CD8-positive, alpha-beta T cell (primary cell): ENCODE measurements at regions of chr20 and their contacts with region 1.

Region 1: DNA sequence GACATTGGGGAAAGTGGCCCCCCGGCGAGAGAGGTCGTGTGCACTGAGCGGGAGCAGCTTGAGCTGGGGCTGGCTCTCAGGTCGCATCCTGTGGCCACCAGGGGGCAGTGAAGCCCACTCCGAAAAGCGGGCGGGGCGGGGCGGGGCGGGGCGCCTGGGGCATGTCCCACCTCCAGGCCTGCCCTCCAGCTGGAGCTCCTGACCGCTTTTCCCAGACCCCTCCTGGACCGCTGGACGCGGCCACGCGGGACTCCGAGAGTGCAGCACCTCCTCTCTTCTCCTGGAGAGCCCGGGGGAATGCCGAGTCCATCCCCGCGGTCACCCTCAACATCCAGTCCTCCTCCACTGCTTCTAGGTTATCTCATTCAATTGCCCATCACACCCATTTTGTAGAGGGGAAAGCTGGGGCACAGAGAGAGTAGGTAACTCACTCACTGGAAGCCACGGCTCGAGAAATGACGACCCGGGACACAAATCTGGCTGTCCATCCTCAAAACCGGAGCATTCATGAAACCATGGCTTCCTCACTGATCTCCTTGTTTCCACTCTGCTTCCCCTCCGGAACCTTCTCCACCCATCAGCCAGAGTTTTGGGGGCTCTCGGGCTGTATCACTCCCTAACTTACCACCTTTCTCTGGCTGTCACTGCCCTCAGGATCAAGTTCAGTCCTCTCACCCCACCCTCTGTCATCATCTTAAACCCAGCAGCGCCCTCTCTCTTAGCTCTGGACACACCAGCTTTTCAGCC is 24.1 kb downstream of the COX4I2 start:
- DNase-seq: peak; percentile 61 to 90 (median 82)
- ATAC-seq: peak; percentile 93
- H3K4me3 ChIP-seq: peak overlapping the region; percentile 47 to 61
- H3K4me3 Mint-ChIP-seq: peak overlapping the region; percentile 74
- H3K27ac ChIP-seq: peak overlapping the region; percentile 18 to 62
- H3K27ac Mint-ChIP-seq: peak overlapping the region; percentile 78
- H3K4me1 ChIP-seq: peaks cover 21% of the 10 kb centered on the region
- H3K4me1 Mint-ChIP-seq: peaks cover 34% of the 10 kb centered on the region
- H3K27me3 ChIP-seq: no peaks in the 10 kb centered on the region
- H3K27me3 Mint-ChIP-seq: no peaks in the 10 kb centered on the region
- CTCF ChIP-seq: peak; percentile 64

Region 2: GRCh38 chr20:31406115-31406514 is 255.7 kb before region 1 on chr20 and contains the start of gene DEFB121:
- CTCF ChIA-PET with region 1: no interaction called
- POLR2A ChIA-PET with region 1: no interaction called
- intact Hi-C with region 1: no loop called
- DNase-seq: no peak
- ATAC-seq: no peak
- H3K4me3 ChIP-seq: no peak within 1 kb of the TSS
- H3K4me3 Mint-ChIP-seq: no peak within 1 kb of the TSS
- H3K27ac ChIP-seq: no peak within 1 kb of the TSS
- H3K27ac Mint-ChIP-seq: no peak within 1 kb of the TSS
- H3K4me1 ChIP-seq: no peaks in the 10 kb centered on the region
- H3K4me1 Mint-ChIP-seq: no peaks in the 10 kb centered on the region
- H3K27me3 ChIP-seq: no peaks in the 10 kb centered on the region
- H3K27me3 Mint-ChIP-seq: peaks cover 4% of the 10 kb centered on the region
- CTCF ChIP-seq: no peak
- total RNA-seq, gene DEFB121: not detected

Region 3: DNA sequence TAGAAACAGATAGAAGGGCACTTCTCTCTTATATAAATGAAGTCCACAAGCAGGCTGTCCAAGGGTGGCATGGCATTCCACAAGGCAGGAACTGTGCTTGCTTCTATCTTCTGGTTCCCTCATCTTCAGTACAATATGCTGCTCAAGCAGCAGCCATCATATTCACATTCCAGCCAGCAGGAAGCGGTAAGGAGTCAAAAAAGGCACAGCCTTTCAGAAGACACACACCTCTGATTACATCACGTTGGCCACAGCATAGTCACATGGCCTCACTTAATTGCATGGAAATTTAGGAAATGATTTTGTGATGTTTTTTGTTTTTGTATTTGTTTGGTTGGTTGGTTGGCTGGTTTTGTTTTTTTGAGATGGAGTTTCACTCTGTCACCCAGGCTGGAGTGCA is 167.7 kb before region 1 on chr20:
- CTCF ChIA-PET with region 1: no interaction called
- POLR2A ChIA-PET with region 1: no interaction called
- intact Hi-C with region 1: no loop called
- DNase-seq: no peak
- ATAC-seq: no peak
- H3K4me3 ChIP-seq: no peak overlapping the region
- H3K4me3 Mint-ChIP-seq: no peak overlapping the region
- H3K27ac ChIP-seq: no peak overlapping the region
- H3K27ac Mint-ChIP-seq: no peak overlapping the region
- H3K4me1 ChIP-seq: no peaks in the 10 kb centered on the region
- H3K4me1 Mint-ChIP-seq: no peaks in the 10 kb centered on the region
- H3K27me3 ChIP-seq: no peaks in the 10 kb centered on the region
- H3K27me3 Mint-ChIP-seq: peaks cover 26% of the 10 kb centered on the region
- CTCF ChIP-seq: no peak

Region 4: GRCh38 chr20:31514159-31515071 is 147.4 kb before region 1 on chr20 and contains the start of gene HM13:
- CTCF ChIA-PET with region 1: interaction called, 3 read pairs
- POLR2A ChIA-PET with region 1: no interaction called
- intact Hi-C with region 1: loop called in 1 of 2 experiments (anchors 5 kb)
- DNase-seq: peak; percentile 75 to 95 (median 88)
- ATAC-seq: peak; percentile 84
- H3K4me3 ChIP-seq: peak within 1 kb of the TSS; percentile 77 to 79
- H3K4me3 Mint-ChIP-seq: no peak within 1 kb of the TSS
- H3K27ac ChIP-seq: peak within 1 kb of the TSS; percentile 68 to 77
- H3K27ac Mint-ChIP-seq: peak within 1 kb of the TSS; percentile 46
- H3K4me1 ChIP-seq: peaks cover 31% of the 10 kb centered on the region
- H3K4me1 Mint-ChIP-seq: peaks cover 9% of the 10 kb centered on the region
- H3K27me3 ChIP-seq: no peaks in the 10 kb centered on the region
- H3K27me3 Mint-ChIP-seq: no peaks in the 10 kb centered on the region
- CTCF ChIP-seq: peak; percentile 91
- total RNA-seq, gene HM13: 106 to 107 TPM

Region 5: GRCh38 chr20:31560094-31560899 is 101.5 kb before region 1 on chr20:
- CTCF ChIA-PET with region 1: interaction called, 4 read pairs
- POLR2A ChIA-PET with region 1: no interaction called
- intact Hi-C with region 1: loop called in 1 of 2 experiments (anchors 5 kb)
- DNase-seq: peak; percentile 54 to 82 (median 78)
- ATAC-seq: peak; percentile 73
- H3K4me3 ChIP-seq: no peak overlapping the region
- H3K4me3 Mint-ChIP-seq: no peak overlapping the region
- H3K27ac ChIP-seq: no peak overlapping the region
- H3K27ac Mint-ChIP-seq: peak overlapping the region; percentile 4
- H3K4me1 ChIP-seq: peaks cover 8% of the 10 kb centered on the region
- H3K4me1 Mint-ChIP-seq: peaks cover 7% of the 10 kb centered on the region
- H3K27me3 ChIP-seq: no peaks in the 10 kb centered on the region
- H3K27me3 Mint-ChIP-seq: no peaks in the 10 kb centered on the region
- CTCF ChIP-seq: peak; percentile 79

Region 6: DNA sequence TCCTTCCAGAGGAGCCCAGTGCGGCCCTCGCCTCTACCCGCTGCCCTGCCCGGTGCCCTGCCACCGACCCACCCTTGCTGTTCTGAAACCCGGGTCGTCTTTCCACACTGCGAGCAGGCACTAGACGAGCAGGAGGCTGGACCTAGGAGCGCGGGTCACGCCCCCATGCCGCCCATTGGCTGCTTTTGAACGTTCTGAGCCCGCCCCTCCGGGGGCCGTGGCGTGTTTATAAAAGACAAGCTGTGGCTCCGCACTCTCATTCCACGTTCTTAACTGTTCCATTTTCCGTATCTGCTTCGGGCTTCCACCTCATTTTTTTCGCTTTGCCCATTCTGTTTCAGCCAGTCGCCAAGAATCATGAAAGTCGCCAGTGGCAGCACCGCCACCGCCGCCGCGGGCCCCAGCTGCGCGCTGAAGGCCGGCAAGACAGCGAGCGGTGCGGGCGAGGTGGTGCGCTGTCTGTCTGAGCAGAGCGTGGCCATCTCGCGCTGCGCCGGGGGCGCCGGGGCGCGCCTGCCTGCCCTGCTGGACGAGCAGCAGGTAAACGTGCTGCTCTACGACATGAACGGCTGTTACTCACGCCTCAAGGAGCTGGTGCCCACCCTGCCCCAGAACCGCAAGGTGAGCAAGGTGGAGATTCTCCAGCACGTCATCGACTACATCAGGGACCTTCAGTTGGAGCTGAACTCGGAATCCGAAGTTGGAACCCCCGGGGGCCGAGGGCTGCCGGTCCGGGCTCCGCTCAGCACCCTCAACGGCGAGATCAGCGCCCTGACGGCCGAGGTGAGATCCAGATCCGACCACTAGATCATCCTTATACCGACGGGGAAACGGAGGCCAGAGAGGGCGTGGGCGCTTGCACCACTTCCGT is 56.5 kb before region 1 on chr20 and contains the start of gene ID1:
- CTCF ChIA-PET with region 1: interaction called, 3 read pairs
- POLR2A ChIA-PET with region 1: no interaction called
- intact Hi-C with region 1: loop called in 1 of 2 experiments (anchors 1 kb)
- DNase-seq: peak; percentile 78 to 93 (median 89)
- ATAC-seq: peak; percentile 89
- H3K4me3 ChIP-seq: peak within 1 kb of the TSS; percentile 57 to 68
- H3K4me3 Mint-ChIP-seq: peak within 1 kb of the TSS; percentile 93
- H3K27ac ChIP-seq: peak within 1 kb of the TSS in 1 of 2 experiments; percentile 30
- H3K27ac Mint-ChIP-seq: peak within 1 kb of the TSS; percentile 60
- H3K4me1 ChIP-seq: peaks cover 24% of the 10 kb centered on the region
- H3K4me1 Mint-ChIP-seq: peaks cover 26% of the 10 kb centered on the region
- H3K27me3 ChIP-seq: peaks cover 5 to 27% of the 10 kb centered on the region in 2 experiments
- H3K27me3 Mint-ChIP-seq: peaks cover 43% of the 10 kb centered on the region
- CTCF ChIP-seq: no peak
- total RNA-seq, gene ID1: 8.1 to 11.0 TPM

Region 7: DNA sequence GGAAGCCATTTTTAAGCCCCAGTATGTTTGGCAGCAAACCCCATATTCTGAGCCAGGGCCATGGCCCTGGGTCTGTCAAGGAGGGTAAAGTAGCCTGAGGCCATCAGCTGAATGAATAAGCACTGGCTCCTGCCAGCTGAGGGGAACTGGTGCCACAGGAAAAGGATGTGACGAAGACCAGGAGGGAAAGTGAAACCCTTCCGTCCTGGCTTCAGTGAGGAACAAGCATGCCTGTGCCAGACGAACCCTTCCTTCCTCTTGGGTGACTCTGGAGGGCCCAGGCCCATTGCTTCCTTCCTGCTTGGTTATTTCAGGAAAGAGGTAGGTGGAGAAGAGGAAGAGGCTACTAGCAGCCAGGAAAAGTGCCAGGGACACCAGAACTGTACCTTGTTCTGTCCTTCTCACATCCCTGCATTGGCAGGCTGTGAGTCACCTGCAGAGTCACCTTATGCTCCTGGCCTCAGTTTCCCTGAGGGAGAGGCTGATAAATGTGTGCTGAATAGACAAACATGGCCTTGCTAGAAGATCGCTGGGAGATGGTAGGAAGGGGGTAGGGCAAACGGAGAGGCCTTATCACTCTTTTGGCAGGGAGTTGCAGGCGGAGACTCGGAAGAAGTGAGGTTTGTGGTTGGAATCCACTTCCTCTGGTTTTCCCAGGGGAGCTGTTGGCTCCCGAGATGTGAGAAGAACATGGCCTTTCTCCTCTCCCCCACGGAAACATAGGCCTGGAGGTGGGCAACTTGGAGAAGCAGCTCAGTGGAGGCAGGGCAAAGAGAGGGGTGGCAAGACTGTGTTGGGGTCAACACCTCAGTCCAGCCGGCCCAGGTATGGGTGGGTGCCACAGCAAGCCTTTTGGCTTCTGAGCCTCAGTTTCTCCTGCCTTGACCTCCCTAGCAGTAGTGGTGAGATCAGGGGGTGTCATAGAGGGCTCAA is 13.4 kb after region 1 on chr20:
- CTCF ChIA-PET with region 1: interaction called, 38 read pairs
- POLR2A ChIA-PET with region 1: interaction called, 4 read pairs
- intact Hi-C with region 1: loop called in 1 of 2 experiments (anchors 2 kb)
- DNase-seq: peak; percentile 6 to 91 (median 65)
- ATAC-seq: peak; percentile 82
- H3K4me3 ChIP-seq: peak overlapping the region; percentile 56 to 66
- H3K4me3 Mint-ChIP-seq: peak overlapping the region; percentile 92
- H3K27ac ChIP-seq: peak overlapping the region; percentile 64 to 99
- H3K27ac Mint-ChIP-seq: peak overlapping the region; percentile 97
- H3K4me1 ChIP-seq: peaks cover 52% of the 10 kb centered on the region
- H3K4me1 Mint-ChIP-seq: peaks cover 62% of the 10 kb centered on the region
- H3K27me3 ChIP-seq: no peaks in the 10 kb centered on the region
- H3K27me3 Mint-ChIP-seq: no peaks in the 10 kb centered on the region
- CTCF ChIP-seq: no peak

Region 8: GRCh38 chr20:31684153-31685015 is 22.6 kb after region 1 on chr20:
- CTCF ChIA-PET with region 1: interaction called, 18 read pairs
- POLR2A ChIA-PET with region 1: interaction called, 3 read pairs
- intact Hi-C with region 1: no loop called
- DNase-seq: peak in 3 of 9 experiments; percentile 16 to 59 (median 53)
- ATAC-seq: peak; percentile 81
- H3K4me3 ChIP-seq: no peak overlapping the region
- H3K4me3 Mint-ChIP-seq: peak overlapping the region; percentile 43
- H3K27ac ChIP-seq: peak overlapping the region in 1 of 2 experiments; percentile 57
- H3K27ac Mint-ChIP-seq: peak overlapping the region; percentile 81
- H3K4me1 ChIP-seq: peaks cover 38% of the 10 kb centered on the region
- H3K4me1 Mint-ChIP-seq: peaks cover 73% of the 10 kb centered on the region
- H3K27me3 ChIP-seq: no peaks in the 10 kb centered on the region
- H3K27me3 Mint-ChIP-seq: no peaks in the 10 kb centered on the region
- CTCF ChIP-seq: no peak

Region 9: GRCh38 chr20:31717478-31718201 is 55.8 kb after region 1 on chr20:
- CTCF ChIA-PET with region 1: interaction called, 270 read pairs
- POLR2A ChIA-PET with region 1: interaction called, 21 read pairs
- intact Hi-C with region 1: no loop called
- DNase-seq: peak in 3 of 9 experiments; percentile 15 to 83 (median 72)
- ATAC-seq: peak; percentile 57
- H3K4me3 ChIP-seq: peak overlapping the region in 1 of 2 experiments; percentile 3
- H3K4me3 Mint-ChIP-seq: peak overlapping the region; percentile 69
- H3K27ac ChIP-seq: peak overlapping the region in 1 of 2 experiments; percentile 55
- H3K27ac Mint-ChIP-seq: peak overlapping the region; percentile 81
- H3K4me1 ChIP-seq: peaks cover 70% of the 10 kb centered on the region
- H3K4me1 Mint-ChIP-seq: peaks cover 92% of the 10 kb centered on the region
- H3K27me3 ChIP-seq: no peaks in the 10 kb centered on the region
- H3K27me3 Mint-ChIP-seq: no peaks in the 10 kb centered on the region
- CTCF ChIP-seq: no peak

Region 10: GRCh38 chr20:31811796-31812728 is 150.3 kb after region 1 on chr20:
- CTCF ChIA-PET with region 1: no interaction called
- POLR2A ChIA-PET with region 1: no interaction called
- intact Hi-C with region 1: no loop called
- DNase-seq: no peak
- ATAC-seq: no peak
- H3K4me3 ChIP-seq: no peak overlapping the region
- H3K4me3 Mint-ChIP-seq: no peak overlapping the region
- H3K27ac ChIP-seq: no peak overlapping the region
- H3K27ac Mint-ChIP-seq: no peak overlapping the region
- H3K4me1 ChIP-seq: no peaks in the 10 kb centered on the region
- H3K4me1 Mint-ChIP-seq: no peaks in the 10 kb centered on the region
- H3K27me3 ChIP-seq: no peaks in the 10 kb centered on the region
- H3K27me3 Mint-ChIP-seq: no peaks in the 10 kb centered on the region
- CTCF ChIP-seq: no peak

Region 11: GRCh38 chr20:32638848-32639247 is 977.0 kb after region 1 on chr20:
- CTCF ChIA-PET with region 1: no interaction called
- POLR2A ChIA-PET with region 1: no interaction called
- intact Hi-C with region 1: no loop called
- DNase-seq: no peak
- ATAC-seq: no peak
- H3K4me3 ChIP-seq: no peak overlapping the region
- H3K4me3 Mint-ChIP-seq: no peak overlapping the region
- H3K27ac ChIP-seq: no peak overlapping the region
- H3K27ac Mint-ChIP-seq: no peak overlapping the region
- H3K4me1 ChIP-seq: no peaks in the 10 kb centered on the region
- H3K4me1 Mint-ChIP-seq: no peaks in the 10 kb centered on the region
- H3K27me3 ChIP-seq: no peaks in the 10 kb centered on the region
- H3K27me3 Mint-ChIP-seq: no peaks in the 10 kb centered on the region
- CTCF ChIP-seq: no peak